Activated CD4-positive, alpha-beta T cell treated with anti-CD3 and anti-CD28 coated beads for 36 hours (primary cell): ENCODE measurements at regions of chr5 and their contacts with region 1.

Region 1: GRCh38 chr5:34459908-34460307 is 196.2 kb upstream of the RAI14 start:
- DNase-seq: no peak
- ATAC-seq: no peak
- H3K4me3 Mint-ChIP-seq: no peak overlapping the region
- H3K27ac Mint-ChIP-seq: no peak overlapping the region
- H3K4me1 Mint-ChIP-seq: peaks cover under 1% of the 10 kb centered on the region
- H3K27me3 Mint-ChIP-seq: peaks cover 6% of the 10 kb centered on the region

Region 2: GRCh38 chr5:33588654-33589372 is 871.1 kb before region 1 on chr5:
- CTCF ChIA-PET with region 1: no interaction called
- POLR2A ChIA-PET with region 1: no interaction called
- intact Hi-C with region 1: loop called in 1 of 2 experiments (anchors 10 kb)
- DNase-seq: peak; percentile 74
- ATAC-seq: peak; percentile 69
- H3K4me3 Mint-ChIP-seq: no peak overlapping the region
- H3K27ac Mint-ChIP-seq: no peak overlapping the region
- H3K4me1 Mint-ChIP-seq: no peaks in the 10 kb centered on the region
- H3K27me3 Mint-ChIP-seq: peaks cover 4% of the 10 kb centered on the region

Region 3: DNA sequence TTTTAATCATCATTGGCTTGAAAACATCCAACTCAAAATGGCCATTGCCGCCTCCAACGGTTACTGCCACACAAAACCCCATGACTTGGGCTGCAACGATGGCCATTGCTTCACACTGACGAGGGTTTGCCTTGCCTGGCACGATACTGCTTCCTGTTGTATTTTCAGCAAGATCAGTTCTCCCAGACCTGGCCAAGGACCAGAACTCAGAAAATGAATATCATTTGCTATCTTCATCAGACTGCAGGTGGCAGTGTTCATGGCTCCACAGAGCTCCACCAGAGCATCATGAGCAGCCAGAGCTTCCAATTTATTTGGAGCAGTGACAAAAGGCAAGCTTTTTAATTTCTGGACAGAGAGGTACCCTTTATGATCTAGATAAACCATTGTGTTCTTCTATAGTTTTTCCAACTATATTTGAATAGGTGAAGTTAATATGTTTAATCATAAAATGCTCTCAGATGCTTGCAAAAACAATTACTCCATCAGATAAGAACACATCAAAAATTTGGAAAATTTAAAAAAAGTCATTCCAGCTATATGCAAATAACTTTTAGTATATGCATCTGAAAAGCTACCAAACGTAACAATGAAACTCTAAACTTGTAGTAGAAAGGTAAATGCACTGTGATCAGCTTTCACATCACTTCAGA is 462.5 kb before region 1 on chr5:
- CTCF ChIA-PET with region 1: interaction called, 12 read pairs
- POLR2A ChIA-PET with region 1: no interaction called
- intact Hi-C with region 1: loop called (anchors 1 to 5 kb)
- DNase-seq: peak; percentile 44
- ATAC-seq: peak; percentile 66
- H3K4me3 Mint-ChIP-seq: no peak overlapping the region
- H3K27ac Mint-ChIP-seq: no peak overlapping the region
- H3K4me1 Mint-ChIP-seq: peaks cover 6% of the 10 kb centered on the region
- H3K27me3 Mint-ChIP-seq: no peaks in the 10 kb centered on the region

Region 4: GRCh38 chr5:34474573-34475021 is 14.7 kb after region 1 on chr5:
- CTCF ChIA-PET with region 1: interaction called, 10 read pairs
- POLR2A ChIA-PET with region 1: no interaction called
- intact Hi-C with region 1: no loop called
- DNase-seq: no peak
- ATAC-seq: peak; percentile 49
- H3K4me3 Mint-ChIP-seq: no peak overlapping the region
- H3K27ac Mint-ChIP-seq: no peak overlapping the region
- H3K4me1 Mint-ChIP-seq: no peaks in the 10 kb centered on the region
- H3K27me3 Mint-ChIP-seq: peaks cover 16% of the 10 kb centered on the region

Region 5: GRCh38 chr5:35030426-35031100 is 570.7 kb after region 1 on chr5:
- CTCF ChIA-PET with region 1: no interaction called
- POLR2A ChIA-PET with region 1: no interaction called
- intact Hi-C with region 1: no loop called
- DNase-seq: no peak
- ATAC-seq: no peak
- H3K4me3 Mint-ChIP-seq: no peak overlapping the region
- H3K27ac Mint-ChIP-seq: no peak overlapping the region
- H3K4me1 Mint-ChIP-seq: no peaks in the 10 kb centered on the region
- H3K27me3 Mint-ChIP-seq: peaks cover 21% of the 10 kb centered on the region